ENCODE measurements at regions of chr9 and their contacts with region 1.

Region 1: GRCh38 chr9:120792898-120793765 is at the start of gene FBXW2:
- DNase-seq: peak; percentile 85 to 88
- ATAC-seq: peak; percentile 97 to 99
- H3K4me3 ChIP-seq: peak within 1 kb of the TSS; percentile 85 to 98 (median 94)
- H3K27ac ChIP-seq: peak within 1 kb of the TSS; percentile 84 to 95 (median 92)
- H3K4me1 ChIP-seq: peaks cover 33% of the 10 kb centered on the region in 2 donors
- H3K27me3 ChIP-seq: no peaks in the 10 kb centered on the region
- CTCF ChIP-seq: peak in 2 of 5 experiments; percentile 18
- POLR2A ChIP-seq: peak; percentile 79 to 85
- total RNA-seq, gene FBXW2: 17.0 to 20.0 (median 19.0) TPM

Region 2: DNA sequence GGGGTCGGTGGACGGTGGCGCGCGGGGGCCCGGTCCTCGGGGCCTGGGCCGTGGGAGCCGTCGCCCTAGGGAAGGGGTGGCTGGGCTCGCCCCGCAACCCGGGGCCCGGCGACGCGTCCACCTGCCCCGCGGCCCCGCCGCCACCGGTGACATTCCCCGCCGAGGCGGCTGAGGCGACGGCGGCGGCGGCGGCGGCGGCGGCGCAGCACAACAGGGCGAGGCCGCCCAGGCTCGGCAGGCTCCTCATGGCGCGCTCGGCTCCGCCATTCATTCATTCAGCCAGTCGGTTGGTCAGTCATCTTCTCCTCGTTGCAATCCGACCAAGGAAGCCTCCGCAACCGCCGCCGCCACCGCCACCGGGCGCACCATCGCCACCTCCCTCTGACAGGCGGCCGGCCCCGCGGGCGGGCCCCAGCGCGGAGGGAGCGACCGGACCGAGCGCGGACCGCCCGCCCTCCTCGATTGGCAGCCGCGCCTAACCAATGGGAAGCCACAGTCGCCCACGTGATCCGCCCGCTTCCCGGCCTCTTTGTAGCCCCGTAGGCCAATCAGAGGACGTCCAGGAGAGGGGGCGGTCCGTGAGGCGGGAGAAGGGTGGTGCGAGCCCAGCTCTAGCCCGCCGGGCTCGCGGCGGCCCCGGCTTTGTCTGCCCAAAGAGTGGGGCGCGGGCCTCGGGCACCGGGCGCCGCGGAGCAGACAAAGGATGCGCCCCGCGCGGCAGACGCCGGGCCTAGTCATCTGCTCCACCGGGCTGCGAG is 78.9 kb before region 1 on chr9 and contains the start of gene MEGF9:
- in situ Hi-C with region 1: no loop called
- intact Hi-C with region 1: loop called (anchors 2 kb)
- DNase-seq: peak; percentile 98
- ATAC-seq: peak; percentile 92 to 93
- H3K4me3 ChIP-seq: peak within 1 kb of the TSS; percentile 74 to 90 (median 82)
- H3K27ac ChIP-seq: peak within 1 kb of the TSS; percentile 72 to 76 (median 74)
- H3K4me1 ChIP-seq: peaks cover 31 to 43% of the 10 kb centered on the region in 2 donors
- H3K27me3 ChIP-seq: no peaks in the 10 kb centered on the region
- CTCF ChIP-seq: peak in 2 of 5 experiments; percentile 16 to 17
- POLR2A ChIP-seq: peak; percentile 79 to 92
- total RNA-seq, gene MEGF9: 6.3 to 15.3 (median 13.5) TPM

Region 3: DNA sequence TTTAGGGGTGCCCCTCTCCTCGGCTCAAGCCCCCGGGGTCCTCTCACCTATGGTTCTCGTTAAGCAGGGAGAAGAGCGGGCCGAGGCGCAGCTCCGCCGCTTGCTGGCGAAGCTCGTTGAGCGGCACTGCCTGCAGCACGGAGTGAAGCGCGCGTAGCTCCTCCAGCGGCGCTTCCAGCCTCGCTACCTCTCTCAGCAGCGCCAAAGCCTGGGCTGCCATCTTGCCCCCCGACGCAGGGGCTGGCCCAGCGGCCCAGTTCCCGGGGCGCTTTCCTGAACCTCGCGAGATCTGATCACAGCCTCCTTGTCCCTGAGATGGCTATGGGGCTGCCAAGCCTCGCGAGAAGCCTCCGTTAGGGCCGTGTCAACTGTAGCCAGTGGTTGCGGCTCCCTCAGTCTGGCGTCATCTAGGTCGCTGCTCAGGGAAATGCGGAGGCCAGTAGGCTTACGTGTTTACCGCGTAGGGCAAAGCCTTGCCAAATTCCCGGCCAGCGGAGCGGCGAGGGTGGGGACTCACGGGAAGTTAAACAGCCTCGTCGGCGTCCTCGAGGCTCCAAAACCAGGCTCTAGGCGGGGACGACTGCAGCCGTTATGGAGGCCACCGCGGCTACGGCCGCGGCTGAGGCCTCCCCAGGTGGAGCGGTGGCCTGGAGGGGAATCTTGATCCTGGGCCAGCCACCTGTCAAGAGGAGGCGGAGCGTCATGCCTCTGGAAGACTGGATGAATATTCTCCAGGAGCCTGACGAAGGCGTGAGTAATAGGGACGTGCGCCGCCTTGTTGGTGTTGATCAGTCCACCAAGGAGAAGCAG is 49.8 kb after region 1 on chr9 and contains the start of gene PSMD5:
- in situ Hi-C with region 1: no loop called
- intact Hi-C with region 1: loop called (anchors 2 kb)
- DNase-seq: peak; percentile 97 to 99
- ATAC-seq: peak; percentile 98 to 99
- H3K4me3 ChIP-seq: peak within 1 kb of the TSS; percentile 79 to 91 (median 81)
- H3K27ac ChIP-seq: peak within 1 kb of the TSS; percentile 90 to 96 (median 91)
- H3K4me1 ChIP-seq: peaks cover 16 to 21% of the 10 kb centered on the region in 2 donors
- H3K27me3 ChIP-seq: no peaks in the 10 kb centered on the region
- CTCF ChIP-seq: no peak
- POLR2A ChIP-seq: peak; percentile 69 to 80
- total RNA-seq, gene PSMD5: 9.3 to 35.3 (median 12.6) TPM